PC-9 (cell line): ENCODE measurements at regions of chr7 and their contacts with region 1.

Region 1: GRCh38 chr7:139340037-139340807 is 915 bp upstream of the FMC1 start:
- DNase-seq: peak; percentile 99
- H3K4me3 ChIP-seq: peak overlapping the region; percentile 80
- H3K27ac ChIP-seq: peak overlapping the region; percentile 93
- H3K4me1 ChIP-seq: peaks cover 10% of the 10 kb centered on the region; the same call in 1 of the 2 replicates
- H3K27me3 ChIP-seq: no peaks in the 10 kb centered on the region
- CTCF ChIP-seq: peak; percentile 80

Region 2: GRCh38 chr7:138886501-138886917 is 453.7 kb before region 1 on chr7:
- CTCF ChIA-PET with region 1: no interaction called
- POLR2A ChIA-PET with region 1: no interaction called
- intact Hi-C with region 1: loop called (anchors 10 kb)
- DNase-seq: peak; percentile 45 to 56
- H3K4me3 ChIP-seq: no peak overlapping the region
- H3K27ac ChIP-seq: no peak overlapping the region
- H3K4me1 ChIP-seq: peaks cover 26% of the 10 kb centered on the region
- H3K27me3 ChIP-seq: no peaks in the 10 kb centered on the region
- CTCF ChIP-seq: peak; percentile 85

Region 3: GRCh38 chr7:139230774-139231512 is 109.3 kb before region 1 on chr7 and contains the start of gene UBN2:
- CTCF ChIA-PET with region 1: no interaction called
- POLR2A ChIA-PET with region 1: interaction called, 9 read pairs
- intact Hi-C with region 1: loop called (anchors 1 kb)
- DNase-seq: peak; percentile 97
- H3K4me3 ChIP-seq: peak within 1 kb of the TSS; percentile 98
- H3K27ac ChIP-seq: peak within 1 kb of the TSS; percentile 41
- H3K4me1 ChIP-seq: peaks cover 37% of the 10 kb centered on the region
- H3K27me3 ChIP-seq: no peaks in the 10 kb centered on the region
- CTCF ChIP-seq: no peak
- total RNA-seq, gene UBN2: 20.3 and 34.1 TPM in 2 replicates

Region 4: DNA sequence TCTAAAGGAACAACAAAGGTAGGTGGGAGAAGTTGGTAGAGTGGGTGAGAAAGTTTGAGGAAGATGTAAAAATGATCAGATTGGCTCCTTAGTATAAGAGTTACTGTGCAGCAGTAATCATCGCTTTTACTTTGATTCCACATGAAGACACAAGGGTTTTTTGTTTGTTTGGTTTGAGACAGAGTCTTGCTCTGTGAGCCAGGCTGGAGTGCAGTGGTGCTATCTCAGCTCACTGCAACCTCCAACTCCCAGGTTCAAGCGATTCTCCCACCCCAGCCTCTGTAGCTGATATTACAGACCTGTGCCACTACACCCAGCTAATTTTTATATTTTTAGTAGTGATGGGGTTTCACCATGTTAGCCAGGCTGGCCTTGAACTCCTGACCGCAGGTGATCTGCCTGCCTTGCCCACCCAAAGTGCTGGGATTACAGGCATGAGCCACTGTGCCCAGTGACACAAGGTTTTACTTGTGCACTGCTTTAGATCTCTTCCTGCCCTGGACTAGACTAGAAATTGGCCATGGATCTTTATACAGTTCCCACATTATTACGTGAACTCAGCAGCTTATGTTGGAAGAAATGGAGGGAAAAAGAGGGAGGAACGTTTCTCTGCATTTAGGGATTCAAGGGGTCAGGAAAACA is 30.2 kb after region 1 on chr7:
- CTCF ChIA-PET with region 1: no interaction called
- POLR2A ChIA-PET with region 1: no interaction called
- intact Hi-C with region 1: no loop called
- DNase-seq: peak in 1 of 2 experiments; percentile 9
- H3K4me3 ChIP-seq: no peak overlapping the region
- H3K27ac ChIP-seq: no peak overlapping the region
- H3K4me1 ChIP-seq: no peaks in the 10 kb centered on the region
- H3K27me3 ChIP-seq: no peaks in the 10 kb centered on the region
- CTCF ChIP-seq: no peak

Region 5: GRCh38 chr7:139431010-139431409 is 90.8 kb after region 1 on chr7:
- CTCF ChIA-PET with region 1: interaction called, 13 read pairs
- POLR2A ChIA-PET with region 1: no interaction called
- intact Hi-C with region 1: no loop called
- DNase-seq: peak; percentile 80 to 93
- H3K4me3 ChIP-seq: no peak overlapping the region
- H3K27ac ChIP-seq: peak overlapping the region; percentile 48
- H3K4me1 ChIP-seq: peaks cover 28% of the 10 kb centered on the region
- H3K27me3 ChIP-seq: no peaks in the 10 kb centered on the region
- CTCF ChIP-seq: no peak

Region 6: GRCh38 chr7:139502226-139502625 is 162.0 kb after region 1 on chr7:
- CTCF ChIA-PET with region 1: no interaction called
- POLR2A ChIA-PET with region 1: no interaction called
- intact Hi-C with region 1: loop called (anchors 5 kb)
- DNase-seq: no peak
- H3K4me3 ChIP-seq: no peak overlapping the region
- H3K27ac ChIP-seq: no peak overlapping the region
- H3K4me1 ChIP-seq: no peaks in the 10 kb centered on the region
- H3K27me3 ChIP-seq: no peaks in the 10 kb centered on the region
- CTCF ChIP-seq: no peak